ENCODE measurements at regions of chr14 and their contacts with region 1.

Region 1: DNA sequence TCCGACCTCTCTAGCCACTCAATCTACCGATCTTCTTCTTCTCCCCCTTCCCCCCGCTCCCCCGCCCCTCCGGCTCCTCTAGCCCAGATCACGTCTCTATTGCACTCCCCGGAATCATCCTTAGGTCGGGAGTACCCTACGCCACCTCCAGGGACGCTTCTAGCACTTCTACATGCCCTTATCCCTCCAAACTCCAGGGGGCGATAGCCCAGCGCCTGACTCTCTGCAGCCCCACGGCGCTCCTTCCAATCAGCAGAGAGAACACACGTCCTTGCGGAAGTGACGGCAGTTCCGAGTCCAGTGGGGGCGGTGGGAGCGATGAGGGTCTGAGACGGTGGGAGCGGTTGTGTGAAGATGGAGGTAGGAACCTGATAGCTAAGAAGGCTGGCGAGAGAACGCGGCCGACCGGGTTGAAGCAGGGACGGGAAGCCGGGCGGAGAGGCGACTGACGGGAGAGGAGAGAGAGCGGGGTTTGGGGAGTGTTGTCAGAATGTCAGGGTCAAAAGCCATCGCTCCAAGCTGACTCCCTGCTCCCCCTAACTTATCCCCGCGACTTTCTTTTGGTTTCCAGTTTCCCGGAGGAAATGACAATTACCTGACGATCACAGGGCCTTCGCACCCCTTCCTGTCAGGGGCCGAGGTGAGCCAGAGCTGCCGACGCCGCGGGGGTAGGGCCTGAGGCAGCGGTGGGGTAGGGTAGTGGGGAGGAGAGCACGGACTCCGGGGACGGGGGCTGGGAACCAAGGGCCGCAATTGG is at the starts of genes RAB2B and TOX4:
- DNase-seq: peak; percentile 97
- ATAC-seq: peak; percentile 99
- H3K4me3 Mint-ChIP-seq: peak within 1 kb of the TSS; percentile 100
- H3K27ac Mint-ChIP-seq: peak within 1 kb of the TSS; percentile 99
- H3K4me1 Mint-ChIP-seq: peaks cover 12% of the 10 kb centered on the region
- H3K27me3 Mint-ChIP-seq: no peaks in the 10 kb centered on the region
- CTCF ChIP-seq: peak; percentile 78
- total RNA-seq, gene RAB2B: 29.6 to 33.3 TPM (median 31.7 TPM) in 3 replicates
- total RNA-seq, gene TOX4: 49.1 to 53.0 TPM (median 52.4 TPM) in 3 replicates

Region 2: DNA sequence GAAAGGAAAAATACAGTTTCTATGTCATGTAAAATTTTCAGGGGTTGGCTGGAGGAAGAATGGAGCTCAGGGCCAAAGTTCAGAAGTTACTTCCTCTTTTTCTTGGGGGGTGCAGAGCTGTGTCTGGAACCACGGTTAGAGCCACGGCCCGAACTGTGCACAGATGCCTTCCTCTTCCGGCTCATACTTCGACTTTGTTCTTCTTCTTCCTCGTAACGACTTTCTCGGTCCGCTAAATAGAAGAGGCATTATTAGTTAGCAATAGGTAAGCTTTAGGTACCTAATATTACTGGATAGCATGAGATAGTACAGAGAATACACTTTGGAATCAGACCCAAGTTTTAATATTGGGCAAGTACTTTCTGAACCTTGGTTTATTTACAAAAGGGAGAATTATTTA is 124.5 kb before region 1 on chr14:
- CTCF ChIA-PET with region 1: no interaction called
- POLR2A ChIA-PET with region 1: no interaction called
- DNase-seq: no peak
- ATAC-seq: no peak
- H3K4me3 Mint-ChIP-seq: no peak overlapping the region
- H3K27ac Mint-ChIP-seq: no peak overlapping the region; the same call in 1 of the 2 replicates
- H3K4me1 Mint-ChIP-seq: peaks cover 6% of the 10 kb centered on the region
- H3K27me3 Mint-ChIP-seq: no peaks in the 10 kb centered on the region; the same call in 1 of the 2 replicates
- CTCF ChIP-seq: no peak

Region 3: DNA sequence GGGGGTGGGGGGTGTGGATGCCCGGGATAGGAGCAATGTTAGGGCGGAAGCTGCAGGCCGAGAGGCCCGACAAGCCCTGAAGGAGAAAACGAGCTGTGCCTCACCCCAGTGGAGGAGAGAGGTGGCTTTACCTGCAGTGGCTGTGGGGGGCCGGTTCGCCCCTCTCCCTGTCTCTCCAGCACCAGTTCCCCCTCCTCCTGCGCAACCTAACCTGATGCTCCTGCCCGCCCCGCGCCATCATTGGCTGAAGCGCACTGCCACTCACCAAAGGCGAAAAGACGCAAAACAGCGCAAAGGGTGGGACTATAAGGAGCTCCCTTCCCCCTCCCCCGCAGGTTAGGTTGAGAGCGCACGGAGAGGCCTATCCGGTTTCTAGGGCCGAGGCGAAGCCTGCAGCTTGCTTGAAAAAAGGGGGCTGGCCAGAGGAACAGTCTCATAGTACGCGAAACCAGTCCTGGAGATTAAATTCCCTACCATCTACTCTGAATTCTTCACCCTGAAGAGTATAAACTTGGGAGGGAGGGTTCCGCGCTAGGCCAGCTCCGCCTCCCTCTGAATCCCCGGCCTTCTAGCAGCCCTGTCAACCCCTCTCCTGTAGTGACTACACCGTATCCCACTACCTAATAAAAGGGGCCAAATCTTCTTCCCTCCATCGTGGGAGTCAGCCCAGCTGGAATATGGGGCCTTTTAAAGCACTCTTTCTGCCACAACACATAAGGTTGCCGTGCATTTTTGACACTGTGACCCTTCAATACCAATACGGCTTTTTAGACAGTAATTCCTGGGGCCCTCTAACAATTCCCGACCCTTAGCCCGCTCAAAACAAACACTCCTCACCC is 39.8 kb before region 1 on chr14:
- CTCF ChIA-PET with region 1: interaction called, 14 read pairs
- POLR2A ChIA-PET with region 1: interaction called, 3 read pairs
- DNase-seq: peak; percentile 100
- ATAC-seq: peak; percentile 99
- H3K4me3 Mint-ChIP-seq: peak overlapping the region; percentile 97
- H3K27ac Mint-ChIP-seq: peak overlapping the region; percentile 96
- H3K4me1 Mint-ChIP-seq: peaks cover 26% of the 10 kb centered on the region
- H3K27me3 Mint-ChIP-seq: no peaks in the 10 kb centered on the region
- CTCF ChIP-seq: no peak

Region 4: DNA sequence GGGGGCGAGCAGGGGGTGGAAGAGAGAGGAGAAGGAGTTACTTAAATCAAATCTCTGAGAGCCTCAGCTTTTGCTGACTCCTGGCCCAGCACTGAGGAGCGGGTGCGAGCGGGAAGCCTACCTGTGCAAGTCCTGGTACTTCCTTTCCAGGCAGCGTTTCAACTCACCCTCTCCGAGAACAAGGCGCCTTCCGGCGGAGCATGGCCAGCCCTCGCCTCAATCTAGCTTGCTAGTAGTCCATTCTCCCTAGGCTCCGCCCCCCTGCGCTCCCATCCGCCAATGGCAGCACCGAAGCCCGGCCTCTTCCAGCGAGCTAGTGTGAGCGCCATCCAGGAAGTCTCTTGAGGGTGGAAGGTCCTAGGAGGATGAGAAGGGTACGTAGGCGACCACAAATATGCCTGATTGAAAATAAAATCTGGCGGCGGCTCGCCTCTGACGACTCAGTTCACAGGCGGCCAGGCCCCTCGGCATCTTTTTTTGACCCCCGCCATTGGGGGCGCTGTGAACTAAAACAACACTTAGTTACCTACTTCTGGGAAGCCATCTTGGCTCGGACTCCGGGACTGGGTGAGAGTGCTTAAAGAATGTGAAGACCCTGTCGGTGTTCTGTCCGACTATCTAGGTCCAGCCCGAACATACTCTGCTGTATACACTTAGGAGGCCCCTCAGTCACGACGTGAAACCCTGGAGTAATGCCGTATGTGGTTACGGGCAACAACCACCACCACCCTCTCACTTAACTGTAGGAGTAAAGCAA is 21.0 kb before region 1 on chr14 and contains the start of gene CHD8:
- CTCF ChIA-PET with region 1: interaction called, 20 read pairs
- POLR2A ChIA-PET with region 1: interaction called, 10 read pairs
- DNase-seq: peak; percentile 100
- ATAC-seq: peak; percentile 99
- H3K4me3 Mint-ChIP-seq: peak within 1 kb of the TSS; percentile 94
- H3K27ac Mint-ChIP-seq: peak within 1 kb of the TSS; percentile 100
- H3K4me1 Mint-ChIP-seq: peaks cover 23% of the 10 kb centered on the region
- H3K27me3 Mint-ChIP-seq: no peaks in the 10 kb centered on the region
- CTCF ChIP-seq: peak; percentile 51; the same call in 1 of the 2 replicates
- total RNA-seq, gene CHD8: 119 to 133 TPM (median 119 TPM) in 3 replicates

Region 5: GRCh38 chr14:21498553-21499526 is 21.7 kb after region 1 on chr14:
- CTCF ChIA-PET with region 1: interaction called, 21 read pairs
- POLR2A ChIA-PET with region 1: no interaction called
- DNase-seq: no peak
- ATAC-seq: peak; percentile 65
- H3K4me3 Mint-ChIP-seq: no peak overlapping the region
- H3K27ac Mint-ChIP-seq: peak overlapping the region; percentile 59
- H3K4me1 Mint-ChIP-seq: peaks cover 29% of the 10 kb centered on the region
- H3K27me3 Mint-ChIP-seq: no peaks in the 10 kb centered on the region
- CTCF ChIP-seq: no peak